A549 (cell line): ENCODE measurements at regions of chr3 and their contacts with region 1.

Region 1: DNA sequence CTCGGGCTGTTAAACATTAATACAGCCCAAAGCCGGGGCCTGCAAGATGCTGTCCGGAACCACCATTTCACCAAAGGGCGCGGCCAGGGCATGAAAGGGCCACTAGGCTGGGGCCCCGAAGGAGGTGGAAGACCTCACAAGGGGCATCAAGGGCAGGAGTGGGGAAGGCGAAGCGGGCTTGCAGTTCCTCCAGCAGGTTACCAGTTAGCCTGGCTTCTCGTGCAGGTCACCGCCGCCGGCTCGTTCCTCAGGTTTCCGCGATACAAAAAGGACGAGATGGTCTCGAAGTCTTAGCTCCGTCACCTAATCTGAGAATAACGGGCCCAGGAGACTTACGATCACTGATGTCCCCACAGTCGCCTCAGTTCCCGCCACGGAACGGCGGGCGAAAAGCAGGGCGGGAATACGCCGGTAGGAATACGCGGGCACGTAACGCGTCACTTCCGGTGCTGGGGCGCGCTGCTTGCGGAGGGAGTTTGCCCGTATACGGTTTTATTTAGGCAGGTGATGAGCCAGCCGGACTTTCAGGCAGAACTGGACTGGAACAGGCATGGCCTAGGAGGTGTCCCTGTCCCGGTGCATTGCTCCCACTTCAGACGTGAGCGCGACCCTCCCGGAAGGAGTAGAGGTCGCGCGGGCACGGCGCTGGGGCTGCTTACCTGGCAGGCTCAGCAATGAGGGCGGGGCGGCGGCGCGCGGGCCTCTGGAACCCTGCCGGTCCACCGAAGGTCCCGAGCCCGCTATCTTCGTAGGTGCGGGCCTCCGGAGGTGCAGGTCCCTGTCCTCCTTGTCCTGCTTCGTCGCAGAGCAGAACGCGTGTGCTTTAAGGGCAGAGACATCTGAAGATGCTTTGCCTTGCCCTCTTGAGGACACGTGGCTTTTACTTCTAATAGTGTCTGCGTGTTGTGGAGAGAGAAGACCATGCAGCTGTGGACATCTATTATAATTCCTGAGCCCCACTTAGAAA is at the start of gene RFC4:
- DNase-seq: peak; percentile 63 to 79
- ATAC-seq: peak; percentile 96 to 98
- H3K4me3 ChIP-seq: peak within 1 kb of the TSS; percentile 67
- H3K27ac ChIP-seq: peak within 1 kb of the TSS; percentile 91 to 96
- H3K4me1 ChIP-seq: peaks cover 15% of the 10 kb centered on the region; the same call in 2 of the 3 replicates
- CTCF ChIP-seq: no peak
- EP300 ChIP-seq: no peak
- POLR2A ChIP-seq: peak; percentile 69
- RAD21 ChIP-seq: no peak
- polyA plus RNA-seq, gene RFC4: 32.8 and 40.6 TPM in 2 replicates

Region 2: DNA sequence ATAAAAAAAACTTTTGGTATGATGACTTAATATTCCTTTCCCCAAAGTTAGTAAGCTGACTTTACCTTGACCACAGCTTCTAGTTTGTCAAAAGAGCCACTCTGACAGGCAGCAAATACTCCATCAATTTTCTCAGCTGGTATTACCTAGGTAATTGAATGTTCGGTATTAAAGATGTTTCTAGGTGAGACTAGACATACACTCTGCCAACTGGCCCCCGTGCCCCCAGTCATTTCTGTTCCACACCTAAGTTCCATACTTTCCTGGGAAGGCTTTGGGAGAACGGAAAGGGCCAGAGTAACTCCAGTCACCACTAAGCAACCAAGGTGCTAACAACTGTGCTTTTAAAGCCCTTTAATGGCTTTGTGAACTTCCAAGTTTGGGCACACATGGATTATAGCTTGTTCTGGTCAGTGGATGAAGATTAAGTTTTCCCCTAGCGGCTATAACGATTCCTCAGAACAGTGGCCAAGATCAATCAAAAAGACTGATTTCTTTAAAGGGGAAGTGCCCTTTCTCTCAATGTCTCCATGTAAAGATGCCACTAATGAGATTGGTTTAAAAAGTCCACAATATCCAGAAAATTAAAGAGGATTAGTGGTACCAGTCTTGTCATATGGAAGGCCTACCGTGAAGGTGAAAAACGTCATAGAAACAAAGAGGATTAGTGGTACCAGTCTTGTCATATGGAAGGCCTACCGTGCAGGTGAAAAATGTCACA is 16.0 kb before region 1 on chr3:
- CTCF ChIA-PET with region 1: no interaction called
- POLR2A ChIA-PET with region 1: no interaction called
- DNase-seq: peak; percentile 23 to 63
- ATAC-seq: peak; percentile 69 to 74
- H3K4me3 ChIP-seq: no peak overlapping the region
- H3K27ac ChIP-seq: no peak overlapping the region
- H3K4me1 ChIP-seq: peaks cover 48% of the 10 kb centered on the region
- CTCF ChIP-seq: no peak
- EP300 ChIP-seq: no peak
- POLR2A ChIP-seq: no peak
- RAD21 ChIP-seq: peak in 1 of 2 experiments; percentile 1; a peak in 1 of 5 replicates

Region 3: GRCh38 chr3:186821429-186822367 is 15.3 kb after region 1 on chr3:
- CTCF ChIA-PET with region 1: interaction called, 15 read pairs
- POLR2A ChIA-PET with region 1: interaction called, 3 read pairs
- DNase-seq: peak in 1 of 2 experiments; percentile 56
- ATAC-seq: peak in 1 of 2 experiments; percentile 59; a peak in 3 of 6 replicates
- H3K4me3 ChIP-seq: no peak overlapping the region
- H3K27ac ChIP-seq: no peak overlapping the region
- H3K4me1 ChIP-seq: peaks cover 10% of the 10 kb centered on the region; the same call in 1 of the 3 replicates
- CTCF ChIP-seq: peak; percentile 64
- EP300 ChIP-seq: no peak
- POLR2A ChIP-seq: no peak
- RAD21 ChIP-seq: peak; percentile 70 to 75